ENCODE measurements at regions of chr19 and their contacts with region 1.

Region 1: GRCh38 chr19:47112997-47113849 is at the start of gene ZC3H4:
- DNase-seq: peak; percentile 100
- H3K4me3 Mint-ChIP-seq: peak within 1 kb of the TSS; percentile 85
- H3K27ac Mint-ChIP-seq: peak within 1 kb of the TSS; percentile 97
- H3K4me1 Mint-ChIP-seq: peaks cover 24% of the 10 kb centered on the region
- H3K27me3 Mint-ChIP-seq: no peaks in the 10 kb centered on the region
- total RNA-seq, gene ZC3H4: 77.1 to 78.6 TPM

Region 2: DNA sequence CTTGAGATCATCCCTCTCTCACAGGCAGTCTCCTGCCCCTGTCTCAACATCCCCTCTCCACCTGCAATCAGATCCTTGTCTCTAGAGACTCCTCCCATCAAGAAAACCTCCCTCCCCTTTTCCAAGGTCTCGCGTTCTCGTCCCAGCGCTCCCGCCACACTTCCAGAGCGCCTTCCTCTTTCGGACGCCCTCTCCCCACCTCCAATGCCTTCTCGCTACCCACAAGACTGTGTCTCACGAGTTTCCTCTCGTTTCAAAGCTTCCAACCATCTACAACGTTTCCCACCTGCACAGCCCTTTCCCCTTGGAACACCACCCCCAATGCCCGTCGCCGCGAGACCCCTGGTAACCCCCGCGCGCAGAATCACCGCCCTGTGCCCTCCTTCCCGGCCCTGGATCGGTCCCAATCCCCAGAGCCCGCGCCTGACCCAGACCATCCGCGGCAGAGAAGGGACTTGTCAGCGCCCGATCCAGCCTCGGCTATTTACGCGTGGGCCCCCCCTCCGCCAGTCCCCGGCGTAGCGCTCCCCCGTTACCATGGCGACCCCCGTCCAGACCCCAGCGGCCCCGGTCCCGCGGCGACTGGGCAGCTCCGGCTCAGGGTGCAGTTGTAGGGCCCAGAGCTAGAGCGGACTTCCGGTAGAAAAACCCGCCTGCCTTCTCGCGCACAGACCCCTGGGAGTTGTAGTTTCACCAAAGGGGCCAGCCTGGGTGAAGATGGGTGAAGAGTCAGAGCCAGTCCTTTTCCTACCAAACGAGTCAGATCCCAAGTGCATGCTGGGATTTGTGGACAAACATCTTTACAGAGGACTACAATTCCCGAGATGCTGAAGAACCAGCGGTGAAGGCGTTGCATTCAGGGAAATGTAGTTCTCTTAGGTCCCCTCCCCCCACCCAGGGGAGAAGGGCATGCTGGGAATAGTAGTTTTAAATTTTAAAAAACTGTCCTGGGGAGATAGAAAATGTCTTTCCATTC is 262.7 kb before region 1 on chr19 and contains the start of gene AP2S1:
- CTCF ChIA-PET with region 1: no interaction called
- POLR2A ChIA-PET with region 1: no interaction called
- intact Hi-C with region 1: loop called (anchors 1 kb)
- DNase-seq: peak; percentile 96
- H3K4me3 Mint-ChIP-seq: peak within 1 kb of the TSS; percentile 95
- H3K27ac Mint-ChIP-seq: peak within 1 kb of the TSS; percentile 80
- H3K4me1 Mint-ChIP-seq: peaks cover 19% of the 10 kb centered on the region
- H3K27me3 Mint-ChIP-seq: no peaks in the 10 kb centered on the region
- total RNA-seq, gene AP2S1: 108 to 117 TPM

Region 3: DNA sequence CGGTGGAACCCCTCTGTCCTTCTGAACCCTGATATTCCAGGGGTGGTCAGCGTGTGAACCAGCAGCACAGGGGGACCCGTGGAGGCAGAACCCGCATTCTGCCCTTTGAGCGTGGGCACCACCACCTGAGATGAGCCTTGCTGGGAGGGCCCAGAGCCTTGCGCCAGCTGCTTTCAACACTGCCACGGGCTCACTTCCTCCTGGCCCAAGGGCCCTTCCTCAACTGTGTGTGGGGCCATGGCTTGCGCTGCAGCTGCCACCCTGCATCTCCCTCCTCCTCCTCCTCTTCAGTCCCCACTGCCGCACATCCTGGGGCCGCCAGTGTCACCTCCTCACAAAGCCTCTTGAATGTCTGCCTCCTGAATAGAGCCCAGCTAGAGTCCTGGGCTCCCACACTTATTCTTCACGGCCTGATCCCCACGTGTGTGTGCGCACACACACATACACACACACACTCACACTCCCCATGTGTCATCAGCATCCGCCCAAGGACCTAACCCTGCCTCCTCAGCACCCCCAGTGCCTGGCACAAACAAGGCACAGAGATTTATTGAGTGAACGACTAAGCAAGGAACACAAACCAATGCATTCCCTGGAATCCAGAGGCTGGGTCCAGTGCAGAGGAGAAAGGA is 37.9 kb before region 1 on chr19:
- CTCF ChIA-PET with region 1: interaction called, 31 read pairs
- POLR2A ChIA-PET with region 1: interaction called, 7 read pairs
- intact Hi-C with region 1: loop called (anchors 2 kb)
- DNase-seq: no peak
- H3K4me3 Mint-ChIP-seq: no peak overlapping the region
- H3K27ac Mint-ChIP-seq: peak overlapping the region; percentile 36
- H3K4me1 Mint-ChIP-seq: peaks cover 3% of the 10 kb centered on the region
- H3K27me3 Mint-ChIP-seq: no peaks in the 10 kb centered on the region

Region 4: GRCh38 chr19:47124937-47125668 is 11.9 kb after region 1 on chr19:
- CTCF ChIA-PET with region 1: interaction called, 23 read pairs
- POLR2A ChIA-PET with region 1: interaction called, 4 read pairs
- intact Hi-C with region 1: loop called (anchors 1 kb)
- DNase-seq: no peak
- H3K4me3 Mint-ChIP-seq: no peak overlapping the region
- H3K27ac Mint-ChIP-seq: peak overlapping the region; percentile 21
- H3K4me1 Mint-ChIP-seq: peaks cover 2% of the 10 kb centered on the region
- H3K27me3 Mint-ChIP-seq: no peaks in the 10 kb centered on the region

Region 5: DNA sequence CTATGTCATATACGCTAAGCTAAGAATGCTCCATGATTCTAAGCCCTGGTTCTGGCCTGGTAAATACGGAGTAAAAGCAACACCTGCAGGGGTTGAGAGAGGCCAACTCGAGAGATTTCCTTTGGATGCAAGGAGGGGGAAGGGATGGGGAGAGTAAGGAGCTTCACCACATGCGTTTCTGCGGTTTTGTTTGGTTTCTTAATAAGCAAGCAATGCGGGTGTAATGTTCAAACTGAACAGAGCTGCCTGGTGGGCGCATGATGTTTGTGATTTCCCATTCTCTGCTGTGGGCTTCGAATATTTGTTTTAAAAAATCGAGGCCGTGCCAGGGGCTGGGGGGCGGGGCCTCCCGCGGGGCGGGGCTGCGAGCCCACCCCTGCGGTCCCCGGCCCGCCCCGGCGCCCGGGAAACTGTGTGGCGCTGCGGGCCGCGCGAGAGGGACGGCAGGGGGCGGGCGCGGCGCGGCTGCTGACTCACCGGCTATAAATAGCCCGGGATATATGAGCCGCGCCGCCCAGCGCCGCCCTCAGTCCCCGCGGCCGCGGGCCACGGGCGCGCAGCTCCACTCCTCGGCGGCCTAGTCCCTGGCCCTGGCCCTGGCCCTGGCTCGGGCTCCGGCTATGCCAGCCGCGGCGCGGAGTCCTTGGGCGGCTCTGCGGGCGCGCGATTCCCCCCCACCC is 112.7 kb after region 1 on chr19:
- CTCF ChIA-PET with region 1: no interaction called
- POLR2A ChIA-PET with region 1: interaction called, 10 read pairs
- intact Hi-C with region 1: no loop called
- DNase-seq: peak; percentile 88
- H3K4me3 Mint-ChIP-seq: peak overlapping the region; percentile 77
- H3K27ac Mint-ChIP-seq: peak overlapping the region; percentile 89
- H3K4me1 Mint-ChIP-seq: peaks cover 10% of the 10 kb centered on the region
- H3K27me3 Mint-ChIP-seq: no peaks in the 10 kb centered on the region

Region 6: GRCh38 chr19:47273313-47273977 is 160.2 kb after region 1 on chr19:
- CTCF ChIA-PET with region 1: no interaction called
- POLR2A ChIA-PET with region 1: interaction called, 3 read pairs
- intact Hi-C with region 1: loop called (anchors 1 kb)
- DNase-seq: peak; percentile 93
- H3K4me3 Mint-ChIP-seq: peak overlapping the region; percentile 92
- H3K27ac Mint-ChIP-seq: peak overlapping the region; percentile 97
- H3K4me1 Mint-ChIP-seq: peaks cover 21% of the 10 kb centered on the region
- H3K27me3 Mint-ChIP-seq: no peaks in the 10 kb centered on the region